GM12878 (cell line): ENCODE measurements at regions of chr17 and their contacts with region 1.

Region 1: DNA sequence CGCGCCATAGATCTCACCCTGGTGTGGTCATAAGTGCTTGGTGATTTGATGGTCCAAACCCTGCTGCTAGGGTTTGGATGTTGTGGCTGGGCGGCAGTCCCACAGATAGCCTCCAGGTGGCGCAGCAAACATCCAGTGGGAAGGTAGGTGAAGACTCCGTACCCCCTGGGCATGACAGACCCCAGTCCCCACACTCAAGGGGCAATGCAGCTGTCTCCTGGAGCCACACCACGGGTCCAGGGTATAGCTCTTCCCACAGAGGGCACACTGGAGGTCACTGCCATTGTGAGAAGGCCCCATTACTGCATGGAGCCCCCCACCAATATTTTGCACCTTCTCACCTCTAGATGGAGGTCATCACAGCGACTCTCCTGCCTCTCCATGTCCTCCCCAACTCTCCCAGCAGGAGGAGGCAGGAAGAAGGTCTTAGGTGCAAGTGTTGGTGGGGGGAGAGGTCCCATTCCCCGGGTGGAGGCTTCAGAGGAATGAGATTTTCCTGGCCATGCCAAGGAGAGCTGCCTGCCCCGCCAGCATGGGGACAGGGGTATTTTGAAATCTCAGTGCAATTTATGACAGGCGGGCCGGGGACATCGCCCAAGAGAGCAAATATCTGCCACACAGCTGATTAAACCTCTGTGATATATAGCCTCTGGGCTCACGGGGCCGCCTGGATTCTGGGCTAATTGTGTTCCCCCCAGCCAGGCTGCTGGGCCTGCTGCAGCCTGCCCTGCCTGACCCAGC is 17.1 kb upstream of the C17orf113 start:
- DNase-seq: no peak
- ATAC-seq: peak; percentile 70
- H3K4me3 ChIP-seq: no peak overlapping the region
- H3K27ac ChIP-seq: no peak overlapping the region
- H3K4me1 ChIP-seq: peaks cover 11% of the 10 kb centered on the region
- H3K27me3 ChIP-seq: peaks cover 3 to 7% of the 10 kb centered on the region in 2 experiments
- CTCF ChIP-seq: peak; percentile 89 to 95 (median 91)
- EP300 ChIP-seq: no peak
- POLR2A ChIP-seq: no peak
- RAD21 ChIP-seq: peak; percentile 56

Region 2: DNA sequence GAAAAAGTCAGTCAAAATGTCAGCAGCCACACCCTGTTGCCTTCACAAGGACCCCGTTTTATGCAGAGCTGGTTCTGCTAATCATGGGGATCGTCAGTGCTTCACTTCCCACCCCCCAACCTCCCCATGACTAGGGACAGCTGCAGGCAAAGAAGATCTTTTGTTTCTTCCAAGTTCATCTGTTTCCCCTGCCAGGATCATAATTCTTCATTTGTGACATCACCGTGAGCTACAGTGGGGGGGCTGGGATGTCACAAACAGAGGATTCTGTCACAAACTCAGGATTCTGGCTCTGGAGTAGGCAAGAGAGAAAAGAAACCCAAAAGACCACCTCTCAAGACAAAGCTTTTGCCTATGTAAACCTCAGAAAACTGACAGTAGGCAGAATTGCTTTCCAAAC is 74.9 kb before region 1 on chr17:
- CTCF ChIA-PET with region 1: no interaction called
- POLR2A ChIA-PET with region 1: no interaction called
- RAD21 ChIA-PET with region 1: no interaction called
- SMC1A ChIA-PET with region 1: no interaction called
- in situ Hi-C with region 1: no loop called
- intact Hi-C with region 1: no loop called
- DNase-seq: no peak
- ATAC-seq: no peak
- H3K4me3 ChIP-seq: no peak overlapping the region
- H3K27ac ChIP-seq: no peak overlapping the region
- H3K4me1 ChIP-seq: peaks cover 24% of the 10 kb centered on the region
- H3K27me3 ChIP-seq: no peaks in the 10 kb centered on the region
- CTCF ChIP-seq: no peak
- EP300 ChIP-seq: no peak
- POLR2A ChIP-seq: no peak
- RAD21 ChIP-seq: no peak

Region 3: GRCh38 chr17:42019509-42020404 is 47.8 kb before region 1 on chr17 and contains the start of gene NKIRAS2:
- CTCF ChIA-PET with region 1: interaction called, 11 read pairs
- POLR2A ChIA-PET with region 1: no interaction called
- RAD21 ChIA-PET with region 1: interaction called, 5 read pairs
- SMC1A ChIA-PET with region 1: no interaction called
- in situ Hi-C with region 1: no loop called
- intact Hi-C with region 1: no loop called
- DNase-seq: peak; percentile 50
- ATAC-seq: peak; percentile 84
- H3K4me3 ChIP-seq: peak within 1 kb of the TSS; percentile 88
- H3K27ac ChIP-seq: peak within 1 kb of the TSS; percentile 76
- H3K4me1 ChIP-seq: peaks cover 28% of the 10 kb centered on the region
- H3K27me3 ChIP-seq: no peaks in the 10 kb centered on the region
- CTCF ChIP-seq: peak; percentile 92 to 98 (median 98); a peak in 5 of 6 replicates
- EP300 ChIP-seq: no peak
- POLR2A ChIP-seq: peak; percentile 87
- RAD21 ChIP-seq: no peak
- polyA plus RNA-seq, gene NKIRAS2: 6.4 to 6.9 TPM

Region 4: DNA sequence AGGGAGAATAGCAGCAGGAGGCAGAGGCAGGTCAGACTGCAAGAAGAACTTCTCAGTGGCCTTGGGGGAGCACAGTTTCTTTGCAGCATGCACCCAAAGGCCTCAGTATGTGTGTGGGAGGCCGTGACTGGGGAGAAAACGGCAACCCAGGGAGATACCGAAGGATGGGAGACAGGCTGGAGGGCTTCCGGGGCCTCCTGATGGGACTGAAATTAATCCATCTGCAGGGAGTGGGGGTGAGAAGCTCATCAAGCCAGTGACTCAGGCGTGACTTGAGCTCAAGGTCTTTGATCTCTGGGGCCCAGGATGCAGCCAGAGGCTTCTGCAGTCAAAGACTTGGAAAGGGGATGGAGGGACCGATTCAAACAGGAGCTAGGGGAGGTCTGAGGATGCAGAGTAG is 12.0 kb before region 1 on chr17:
- CTCF ChIA-PET with region 1: interaction called, 15 read pairs
- POLR2A ChIA-PET with region 1: interaction called, 3 read pairs
- RAD21 ChIA-PET with region 1: no interaction called
- SMC1A ChIA-PET with region 1: no interaction called
- in situ Hi-C with region 1: no loop called
- intact Hi-C with region 1: no loop called
- DNase-seq: no peak
- ATAC-seq: no peak
- H3K4me3 ChIP-seq: no peak overlapping the region
- H3K27ac ChIP-seq: no peak overlapping the region
- H3K4me1 ChIP-seq: no peaks in the 10 kb centered on the region
- H3K27me3 ChIP-seq: peaks cover 2 to 4% of the 10 kb centered on the region in 2 experiments
- CTCF ChIP-seq: no peak
- EP300 ChIP-seq: no peak
- POLR2A ChIP-seq: no peak
- RAD21 ChIP-seq: no peak

Region 5: DNA sequence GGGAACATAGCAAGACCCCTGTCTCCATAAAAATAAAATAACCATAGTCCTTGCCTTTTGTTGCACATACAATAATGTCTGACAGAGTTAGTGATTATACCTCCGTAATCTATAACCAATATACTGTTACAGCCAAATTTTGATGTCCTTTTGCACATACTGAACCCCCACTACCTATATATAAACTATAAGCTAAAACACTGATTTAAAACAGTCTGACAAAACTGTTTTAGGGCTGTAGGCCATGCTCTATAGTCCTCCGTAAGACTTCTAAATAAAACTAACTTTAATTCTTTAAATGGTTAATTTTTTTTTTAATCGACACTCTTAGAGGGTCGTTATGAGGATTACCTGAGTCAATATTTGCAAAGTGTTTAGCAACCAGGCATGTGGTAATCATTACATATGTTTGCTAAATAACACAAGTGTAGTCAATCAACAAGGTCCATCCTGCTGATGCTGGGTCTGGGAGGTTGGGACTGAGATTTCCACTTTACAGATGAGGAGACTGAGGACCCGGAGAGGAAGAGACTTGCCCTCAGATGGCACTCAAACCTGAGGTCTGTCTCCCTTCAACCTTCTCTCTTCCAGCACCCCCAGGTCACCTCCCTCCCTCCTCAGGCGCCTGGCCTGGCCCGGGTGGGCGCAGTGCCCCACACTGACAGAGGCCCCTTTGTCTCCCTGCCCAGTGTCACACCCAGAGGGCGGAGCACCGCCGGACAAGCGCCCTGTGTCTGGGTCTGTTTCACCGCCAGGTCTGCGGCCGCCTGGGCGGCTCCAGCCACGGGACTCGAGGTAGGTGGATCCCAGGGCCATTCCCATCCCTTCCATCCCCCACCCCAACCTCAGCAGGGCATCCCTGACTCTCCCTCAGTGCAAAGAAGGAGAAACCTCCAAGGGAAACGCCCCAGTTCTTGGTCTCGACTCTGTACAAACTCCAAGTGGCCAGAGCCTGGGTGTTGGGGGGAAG is 20.5 kb after region 1 on chr17:
- CTCF ChIA-PET with region 1: interaction called, 10 read pairs
- POLR2A ChIA-PET with region 1: no interaction called
- RAD21 ChIA-PET with region 1: no interaction called
- SMC1A ChIA-PET with region 1: no interaction called
- in situ Hi-C with region 1: no loop called
- intact Hi-C with region 1: no loop called
- DNase-seq: no peak
- ATAC-seq: no peak
- H3K4me3 ChIP-seq: no peak overlapping the region
- H3K27ac ChIP-seq: no peak overlapping the region
- H3K4me1 ChIP-seq: no peaks in the 10 kb centered on the region
- H3K27me3 ChIP-seq: no peaks in the 10 kb centered on the region; a peak in 2 of 4 replicates
- CTCF ChIP-seq: no peak
- EP300 ChIP-seq: no peak
- POLR2A ChIP-seq: no peak
- RAD21 ChIP-seq: no peak

Region 6: DNA sequence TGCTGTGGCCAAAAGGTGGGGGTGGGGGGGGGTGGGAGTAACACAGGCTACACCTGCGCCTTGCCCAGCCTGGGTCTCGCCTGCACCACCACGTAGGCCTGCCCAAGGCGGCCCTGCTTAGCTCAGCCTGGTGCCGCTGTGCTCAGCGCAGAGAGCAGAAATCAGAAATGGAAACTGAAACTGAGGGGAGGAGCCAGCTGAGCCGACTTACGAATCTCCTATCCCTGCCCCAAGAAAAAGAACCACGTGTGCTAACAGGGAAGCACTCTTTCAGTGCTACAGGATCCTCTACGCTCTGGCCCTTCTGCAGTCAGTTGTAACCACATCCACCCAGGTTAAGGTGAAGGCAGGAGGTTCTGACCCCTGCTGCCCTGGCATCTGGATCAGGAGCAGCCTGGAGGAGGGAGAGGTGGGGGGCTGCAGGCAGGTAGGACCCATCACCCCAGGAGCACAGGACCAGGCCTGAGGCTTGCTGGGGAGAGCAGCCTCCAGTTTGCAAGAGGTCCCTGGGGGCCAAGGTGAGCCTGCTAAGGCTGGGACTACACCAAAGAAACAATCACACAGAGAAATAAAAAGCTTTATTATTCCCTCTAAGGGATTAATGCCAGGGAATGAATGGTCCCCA is 45.1 kb after region 1 on chr17 and contains the start of gene DHX58:
- CTCF ChIA-PET with region 1: interaction called, 100 read pairs
- POLR2A ChIA-PET with region 1: interaction called, 5 read pairs
- RAD21 ChIA-PET with region 1: interaction called, 8 read pairs
- SMC1A ChIA-PET with region 1: interaction called, 17 read pairs
- in situ Hi-C with region 1: no loop called
- intact Hi-C with region 1: loop called (anchors 1 kb)
- DNase-seq: peak; percentile 90
- ATAC-seq: peak; percentile 85
- H3K4me3 ChIP-seq: peak within 1 kb of the TSS; percentile 79
- H3K27ac ChIP-seq: peak within 1 kb of the TSS; percentile 98
- H3K4me1 ChIP-seq: peaks cover 37% of the 10 kb centered on the region
- H3K27me3 ChIP-seq: no peaks in the 10 kb centered on the region
- CTCF ChIP-seq: no peak
- EP300 ChIP-seq: no peak
- POLR2A ChIP-seq: peak; percentile 94
- RAD21 ChIP-seq: no peak
- polyA plus RNA-seq, gene DHX58: 3.5 to 3.7 TPM

Region 7: GRCh38 chr17:42129109-42129837 is 61.8 kb after region 1 on chr17:
- CTCF ChIA-PET with region 1: no interaction called
- POLR2A ChIA-PET with region 1: no interaction called
- RAD21 ChIA-PET with region 1: no interaction called
- SMC1A ChIA-PET with region 1: no interaction called
- in situ Hi-C with region 1: no loop called
- intact Hi-C with region 1: no loop called
- DNase-seq: no peak
- ATAC-seq: no peak
- H3K4me3 ChIP-seq: no peak overlapping the region
- H3K27ac ChIP-seq: no peak overlapping the region
- H3K4me1 ChIP-seq: peaks cover 22% of the 10 kb centered on the region
- H3K27me3 ChIP-seq: no peaks in the 10 kb centered on the region
- CTCF ChIP-seq: no peak
- EP300 ChIP-seq: no peak
- POLR2A ChIP-seq: no peak
- RAD21 ChIP-seq: no peak